MCF 10A (cell line): ENCODE measurements at regions of chr20 and their contacts with region 1.

Region 1: DNA sequence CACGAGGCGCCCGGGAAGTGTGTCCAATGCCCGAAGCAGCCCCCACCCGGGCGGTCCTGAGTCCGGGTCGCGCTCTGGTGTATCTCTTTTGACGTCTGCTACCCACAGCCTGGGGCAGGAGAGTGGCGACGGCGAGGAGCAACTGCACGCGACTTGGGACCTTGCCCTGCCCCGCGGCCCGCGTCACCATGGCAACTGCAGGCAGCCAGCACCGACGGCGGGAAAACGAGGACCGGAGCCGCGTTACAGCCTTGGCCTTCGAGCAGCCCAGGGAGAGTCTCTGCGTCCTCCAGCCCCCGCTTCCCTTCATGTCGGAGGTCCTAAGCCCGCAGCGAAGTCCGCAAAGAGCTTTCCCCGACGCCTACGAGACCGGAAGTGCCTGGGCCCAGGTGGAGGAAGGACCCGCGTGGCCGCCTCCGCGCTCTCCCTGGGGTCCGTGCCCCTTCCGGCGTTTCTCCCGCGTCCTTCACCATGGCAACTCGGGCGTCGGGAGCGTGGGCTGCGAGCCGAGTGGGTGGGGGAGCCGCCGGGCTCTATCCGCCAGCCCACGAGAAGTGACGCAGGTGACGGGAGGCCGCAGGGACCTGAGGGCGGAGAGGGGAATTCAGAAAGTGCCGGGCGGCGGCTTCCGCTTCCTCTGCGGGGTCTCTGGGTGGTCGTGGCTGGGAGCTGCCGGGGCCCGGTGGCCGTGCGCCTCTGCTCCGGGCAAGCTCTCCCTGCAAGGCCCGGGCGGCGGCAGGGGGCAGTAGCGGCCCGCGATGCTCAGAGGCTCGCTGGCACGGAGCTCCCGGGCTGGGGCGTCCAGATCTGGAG is 88.6 kb upstream of the TGM3 start:
- DNase-seq: peak; percentile 64
- H3K4me3 Mint-ChIP-seq: peak overlapping the region; percentile 65
- H3K27ac Mint-ChIP-seq: no peak overlapping the region
- H3K4me1 Mint-ChIP-seq: no peaks in the 10 kb centered on the region
- H3K27me3 Mint-ChIP-seq: peaks cover 8% of the 10 kb centered on the region
- CTCF ChIP-seq: peak; percentile 93

Region 2: DNA sequence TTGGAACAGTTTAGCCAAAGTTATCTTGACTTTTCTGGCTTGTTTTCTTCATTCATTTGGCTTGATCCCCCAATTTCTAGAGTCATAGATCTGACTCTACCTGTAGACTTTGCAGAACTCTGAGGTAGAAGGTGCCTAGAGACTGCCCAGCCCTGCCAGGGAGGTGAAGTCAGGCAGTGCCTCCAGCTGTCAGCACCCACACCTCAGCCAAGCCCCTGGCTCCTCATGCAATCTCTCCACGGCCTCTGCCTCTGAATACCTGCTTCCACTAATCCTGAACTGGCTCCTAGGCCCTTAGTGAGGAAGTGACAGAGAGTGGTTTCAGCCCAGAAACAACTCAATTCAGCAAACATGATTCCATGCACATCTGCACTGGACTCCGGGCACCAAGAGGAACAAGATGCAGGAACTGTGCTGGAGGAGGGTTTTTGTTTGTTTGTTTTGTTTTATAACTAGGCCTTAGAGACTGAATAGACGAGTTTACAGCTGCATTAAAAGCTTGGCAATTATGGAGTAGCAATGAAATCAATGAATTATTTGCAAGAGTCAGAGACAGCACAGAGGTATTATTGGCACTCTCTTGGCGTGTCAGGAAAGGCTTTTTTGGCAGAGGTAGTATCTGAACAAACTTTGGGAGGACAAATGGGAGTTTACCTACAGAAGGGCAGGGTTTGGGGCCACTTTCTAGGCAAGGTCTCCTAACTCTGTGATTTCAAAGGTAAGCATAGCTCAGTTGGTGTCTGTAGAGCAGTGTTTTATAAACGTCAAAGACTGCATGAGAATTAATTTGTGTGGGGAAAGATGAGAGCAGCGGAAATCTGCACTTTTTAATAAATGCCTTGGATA is 113.9 kb after region 1 on chr20:
- CTCF ChIA-PET with region 1: no interaction called
- POLR2A ChIA-PET with region 1: no interaction called
- intact Hi-C with region 1: no loop called
- DNase-seq: no peak
- H3K4me3 Mint-ChIP-seq: no peak overlapping the region
- H3K27ac Mint-ChIP-seq: no peak overlapping the region
- H3K4me1 Mint-ChIP-seq: no peaks in the 10 kb centered on the region
- H3K27me3 Mint-ChIP-seq: peaks cover 45% of the 10 kb centered on the region
- CTCF ChIP-seq: no peak

Region 3: DNA sequence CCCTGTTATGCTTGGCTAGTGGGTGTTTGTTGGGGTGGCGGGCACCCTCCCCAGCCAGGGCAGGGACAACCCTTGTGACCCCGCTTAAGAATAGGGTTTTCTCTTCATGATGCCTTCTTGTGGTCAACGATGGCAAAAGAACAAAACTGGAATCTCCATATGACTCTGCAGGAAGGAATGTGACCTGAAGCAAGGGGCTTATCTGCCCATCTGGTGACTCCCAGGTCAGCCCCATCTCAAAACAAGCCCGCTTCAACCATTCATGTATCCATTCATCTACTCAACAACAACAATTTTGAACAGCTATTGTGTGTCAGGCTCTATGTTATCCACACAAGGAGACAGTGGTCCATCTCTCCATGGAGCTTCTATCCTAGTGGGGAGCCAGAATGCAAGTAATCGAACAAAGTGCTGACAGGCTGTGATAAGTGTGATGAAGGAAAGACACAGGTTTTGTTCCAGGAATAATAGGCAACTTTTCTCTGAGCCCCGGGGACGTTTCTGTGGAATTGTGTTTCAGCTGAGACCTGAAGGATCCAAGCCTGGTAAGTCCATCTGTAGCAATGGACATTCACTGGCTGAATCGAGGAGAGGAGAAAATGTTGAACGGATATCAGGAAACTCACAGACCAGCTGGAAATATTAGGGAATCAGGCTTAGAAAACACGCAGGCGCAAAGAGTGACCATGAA is 142.8 kb after region 1 on chr20:
- CTCF ChIA-PET with region 1: interaction called, 10 read pairs
- POLR2A ChIA-PET with region 1: interaction called, 3 read pairs
- intact Hi-C with region 1: no loop called
- DNase-seq: no peak
- H3K4me3 Mint-ChIP-seq: no peak overlapping the region
- H3K27ac Mint-ChIP-seq: no peak overlapping the region
- H3K4me1 Mint-ChIP-seq: no peaks in the 10 kb centered on the region
- H3K27me3 Mint-ChIP-seq: no peaks in the 10 kb centered on the region
- CTCF ChIP-seq: no peak

Region 4: DNA sequence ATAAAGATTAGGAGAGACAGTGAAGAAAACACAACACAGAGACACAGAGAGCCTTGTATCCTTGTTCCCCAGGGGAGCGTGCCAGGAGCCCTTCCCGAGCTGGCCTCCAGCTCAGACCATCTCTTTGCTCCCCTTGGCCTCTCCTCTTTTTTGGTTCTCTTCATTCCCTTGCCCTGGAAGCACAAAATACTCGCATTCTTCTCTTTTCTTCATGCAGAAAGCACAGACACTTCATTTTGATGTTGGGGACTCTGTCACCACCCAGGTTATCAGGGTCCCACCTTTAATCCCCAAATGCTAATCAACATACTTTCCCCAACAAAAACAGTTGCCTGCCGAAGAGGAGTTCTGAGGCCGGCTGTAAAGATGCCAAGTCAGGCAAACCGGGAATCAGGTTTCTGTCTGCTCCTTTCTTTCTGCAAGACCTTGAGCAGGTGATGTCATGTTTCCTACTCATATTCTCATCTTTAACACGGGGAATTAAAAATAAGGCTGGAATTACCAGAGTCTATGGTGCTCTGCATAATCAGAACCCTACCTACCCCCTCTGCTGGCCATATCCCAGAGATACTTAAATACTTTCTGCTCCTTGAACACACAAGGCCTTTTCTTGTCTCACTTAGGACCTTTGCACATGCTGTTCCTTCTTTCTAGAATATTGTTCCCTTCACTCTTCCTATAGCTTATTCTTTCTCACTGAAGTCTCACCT is 195.3 kb after region 1 on chr20:
- CTCF ChIA-PET with region 1: interaction called, 40 read pairs
- POLR2A ChIA-PET with region 1: interaction called, 3 read pairs
- intact Hi-C with region 1: loop called (anchors 1 kb)
- DNase-seq: peak; percentile 55
- H3K4me3 Mint-ChIP-seq: no peak overlapping the region
- H3K27ac Mint-ChIP-seq: no peak overlapping the region
- H3K4me1 Mint-ChIP-seq: no peaks in the 10 kb centered on the region
- H3K27me3 Mint-ChIP-seq: no peaks in the 10 kb centered on the region
- CTCF ChIP-seq: peak; percentile 43

Region 5: DNA sequence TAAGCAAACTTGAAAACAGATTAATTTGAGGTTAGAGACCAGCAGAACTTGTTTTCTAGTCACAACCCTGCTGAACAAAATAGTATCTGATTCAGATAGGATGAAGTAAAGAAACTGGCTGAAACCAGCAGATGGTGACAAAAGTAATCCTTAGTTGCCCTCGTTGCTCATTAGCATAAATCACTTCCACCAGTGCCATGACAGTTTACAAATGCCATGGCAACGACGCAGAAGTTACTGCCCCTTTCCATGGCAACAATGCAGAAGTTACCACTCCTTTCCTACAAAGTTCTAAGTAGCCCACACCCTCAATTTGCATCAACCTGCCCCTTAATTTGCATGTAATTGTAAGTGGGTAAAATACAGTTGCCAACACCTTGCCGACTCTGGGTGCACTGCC is 239.7 kb after region 1 on chr20:
- CTCF ChIA-PET with region 1: interaction called, 62 read pairs
- POLR2A ChIA-PET with region 1: interaction called, 8 read pairs
- intact Hi-C with region 1: loop called (anchors 1 kb)
- DNase-seq: no peak
- H3K4me3 Mint-ChIP-seq: no peak overlapping the region
- H3K27ac Mint-ChIP-seq: no peak overlapping the region
- H3K4me1 Mint-ChIP-seq: peaks cover 25% of the 10 kb centered on the region
- H3K27me3 Mint-ChIP-seq: no peaks in the 10 kb centered on the region
- CTCF ChIP-seq: no peak